ENCODE measurements at regions of chr12 and their contacts with region 1.

Region 1: DNA sequence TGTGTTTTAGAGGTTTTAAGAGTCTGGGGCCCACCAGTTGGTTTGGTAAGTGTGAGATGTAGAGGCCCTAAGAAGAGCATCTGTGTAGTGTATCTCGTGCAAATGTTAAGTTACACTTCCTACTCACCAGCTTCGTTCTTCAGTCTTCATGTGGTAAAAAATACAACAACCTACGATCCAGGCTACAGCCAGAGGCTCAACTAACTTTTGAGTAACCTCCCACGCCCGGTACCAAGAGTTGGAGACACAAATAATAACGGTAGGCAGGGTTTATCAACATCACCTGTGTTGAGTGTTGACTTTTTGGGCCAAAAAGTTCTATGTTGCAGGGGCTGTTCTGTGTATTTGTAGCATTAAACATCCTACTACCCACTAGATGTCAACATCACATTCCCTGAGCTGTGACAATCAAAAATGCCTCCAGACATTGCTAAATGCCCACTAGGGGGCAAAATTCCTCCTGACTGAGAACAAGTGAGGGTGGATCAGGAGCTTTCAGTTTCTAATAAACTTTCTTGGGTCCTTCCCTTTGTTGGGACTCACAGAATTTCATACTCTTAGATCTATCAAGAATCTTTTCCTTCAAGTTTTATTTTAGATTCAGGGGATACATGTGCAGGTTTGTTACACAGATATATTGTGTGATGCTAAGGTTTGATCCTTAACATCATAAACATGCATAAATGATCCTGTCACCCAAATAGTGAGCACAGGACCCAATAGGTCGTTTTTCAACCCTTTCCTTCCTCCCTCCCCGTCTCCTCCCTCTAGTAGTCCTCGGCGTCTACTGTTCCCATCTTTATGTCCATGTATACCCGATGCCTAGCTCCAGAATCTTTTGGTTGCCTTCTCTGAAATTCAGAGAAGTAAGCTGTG is 94.7 kb downstream of the SLC2A13 start:
- DNase-seq: peak; percentile 63
- H3K4me3 ChIP-seq: peak overlapping the region in 1 of 3 experiments; percentile 30
- H3K27ac ChIP-seq: no peak overlapping the region
- H3K4me1 ChIP-seq: no peaks in the 10 kb centered on the region
- H3K27me3 ChIP-seq: no peaks in the 10 kb centered on the region
- CTCF ChIP-seq: peak; percentile 72 to 76
- POLR2A ChIP-seq: no peak

Region 2: DNA sequence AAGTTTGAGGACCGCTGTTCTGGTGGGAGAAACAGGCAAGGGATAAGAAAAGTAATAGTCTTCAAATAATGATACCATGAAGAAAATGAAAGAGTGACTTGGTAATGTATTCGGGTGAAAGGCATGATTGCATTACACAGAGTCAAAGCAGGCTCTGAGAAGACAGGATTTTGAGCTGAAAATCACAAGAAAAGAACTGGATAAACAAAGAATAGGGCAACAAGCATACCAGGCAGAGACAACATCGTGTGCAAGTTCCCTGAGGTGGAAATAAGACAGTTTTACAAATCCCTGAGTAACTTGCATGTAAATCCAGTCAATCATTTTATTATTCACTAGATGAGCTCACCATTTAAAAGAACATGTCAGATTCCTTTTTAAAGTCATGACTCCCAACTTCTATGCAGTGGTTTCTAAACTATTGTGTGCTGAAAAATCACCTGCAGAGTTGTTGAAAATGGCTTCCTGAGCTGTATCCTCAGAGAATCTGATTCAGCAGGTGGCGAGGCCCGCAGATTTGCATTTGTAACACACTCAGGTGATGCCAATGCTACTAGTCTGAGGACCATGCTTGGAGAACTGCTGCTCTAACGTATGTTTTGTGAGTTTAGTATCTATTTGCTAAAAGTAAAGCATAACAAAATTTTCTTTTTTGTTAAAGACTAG is 258.5 kb before region 1 on chr12:
- CTCF ChIA-PET with region 1: no interaction called
- POLR2A ChIA-PET with region 1: no interaction called
- dilution Hi-C with region 1: no loop called
- intact Hi-C with region 1: no loop called
- DNase-seq: no peak
- H3K4me3 ChIP-seq: no peak overlapping the region
- H3K27ac ChIP-seq: no peak overlapping the region
- H3K4me1 ChIP-seq: no peaks in the 10 kb centered on the region
- H3K27me3 ChIP-seq: no peaks in the 10 kb centered on the region
- CTCF ChIP-seq: no peak
- POLR2A ChIP-seq: no peak

Region 3: GRCh38 chr12:39764944-39765560 is 246.1 kb before region 1 on chr12:
- CTCF ChIA-PET with region 1: interaction called, 11 read pairs
- POLR2A ChIA-PET with region 1: no interaction called
- dilution Hi-C with region 1: no loop called
- intact Hi-C with region 1: no loop called
- DNase-seq: peak; percentile 52
- H3K4me3 ChIP-seq: no peak overlapping the region
- H3K27ac ChIP-seq: no peak overlapping the region
- H3K4me1 ChIP-seq: no peaks in the 10 kb centered on the region
- H3K27me3 ChIP-seq: no peaks in the 10 kb centered on the region
- CTCF ChIP-seq: peak; percentile 59 to 64
- POLR2A ChIP-seq: no peak

Region 4: DNA sequence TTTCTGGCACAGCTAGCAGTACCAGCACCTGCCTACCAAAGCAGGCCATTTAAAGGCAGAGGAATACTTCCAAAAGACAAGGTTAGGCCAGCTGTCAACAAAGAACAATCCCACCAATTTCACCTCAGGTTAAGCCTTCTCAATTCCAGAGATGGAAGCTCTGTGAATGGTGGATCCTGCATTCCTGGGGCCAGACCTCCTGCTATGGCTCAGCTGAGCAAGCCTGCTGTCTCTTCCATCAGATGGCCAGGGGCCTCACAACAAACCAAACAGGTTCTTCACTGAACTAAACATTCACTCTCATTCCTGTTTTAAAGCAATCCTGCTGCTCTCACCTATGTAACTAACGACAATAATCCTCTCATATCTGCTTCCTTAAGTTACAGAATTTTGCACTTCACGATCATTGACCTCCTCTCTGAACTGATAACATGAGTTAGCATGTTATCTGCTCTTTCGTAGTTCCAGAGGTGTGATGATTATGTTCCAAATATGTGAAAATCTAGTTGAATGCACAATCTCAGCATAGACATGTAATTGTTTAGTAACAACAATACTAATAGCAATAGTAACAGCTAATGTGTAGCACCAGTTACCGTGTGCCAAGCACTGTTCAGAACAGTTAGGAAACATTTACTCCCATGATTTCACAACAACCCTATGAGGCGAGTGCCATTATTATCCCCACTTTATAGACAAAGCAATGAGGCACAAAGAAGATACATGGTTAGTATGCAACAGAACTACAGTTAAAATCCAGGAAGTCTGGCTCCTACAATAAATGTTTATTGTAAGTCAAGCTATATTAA is 21.5 kb after region 1 on chr12:
- CTCF ChIA-PET with region 1: interaction called, 46 read pairs
- POLR2A ChIA-PET with region 1: no interaction called
- dilution Hi-C with region 1: no loop called
- intact Hi-C with region 1: no loop called
- DNase-seq: no peak
- H3K4me3 ChIP-seq: no peak overlapping the region
- H3K27ac ChIP-seq: no peak overlapping the region
- H3K4me1 ChIP-seq: no peaks in the 10 kb centered on the region
- H3K27me3 ChIP-seq: no peaks in the 10 kb centered on the region
- CTCF ChIP-seq: no peak
- POLR2A ChIP-seq: no peak

Region 5: DNA sequence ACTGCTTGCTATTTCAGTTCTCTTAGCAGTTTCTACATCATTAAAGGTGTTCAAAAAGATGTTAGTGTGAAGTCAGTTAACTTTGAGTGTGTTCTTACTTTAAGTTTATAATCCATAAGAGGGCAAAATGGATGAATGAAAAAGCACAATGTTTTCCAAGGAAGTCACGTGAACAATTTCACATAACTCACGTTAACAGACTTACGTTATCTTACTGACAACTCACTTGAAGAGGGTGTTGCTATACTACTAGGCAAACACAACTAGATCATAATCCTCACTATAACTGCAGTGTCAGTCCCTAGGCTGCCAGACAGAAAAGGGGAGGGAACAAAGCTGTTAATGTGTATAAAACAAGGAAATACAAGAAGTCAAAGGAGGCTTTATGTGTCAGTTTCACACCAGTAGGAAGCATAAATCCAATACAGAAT is 88.3 kb after region 1 on chr12:
- CTCF ChIA-PET with region 1: interaction called, 189 read pairs
- POLR2A ChIA-PET with region 1: no interaction called
- dilution Hi-C with region 1: no loop called
- intact Hi-C with region 1: no loop called
- DNase-seq: peak; percentile 8
- H3K4me3 ChIP-seq: no peak overlapping the region
- H3K27ac ChIP-seq: no peak overlapping the region
- H3K4me1 ChIP-seq: peaks cover 3% of the 10 kb centered on the region
- H3K27me3 ChIP-seq: no peaks in the 10 kb centered on the region
- CTCF ChIP-seq: no peak
- POLR2A ChIP-seq: no peak

Region 6: GRCh38 chr12:40117818-40118217 is 106.7 kb after region 1 on chr12:
- CTCF ChIA-PET with region 1: interaction called, 17 read pairs
- POLR2A ChIA-PET with region 1: no interaction called
- dilution Hi-C with region 1: no loop called
- intact Hi-C with region 1: no loop called
- DNase-seq: no peak
- H3K4me3 ChIP-seq: no peak overlapping the region
- H3K27ac ChIP-seq: no peak overlapping the region
- H3K4me1 ChIP-seq: no peaks in the 10 kb centered on the region
- H3K27me3 ChIP-seq: peaks cover 0 to 5% of the 10 kb centered on the region in 2 experiments
- CTCF ChIP-seq: no peak
- POLR2A ChIP-seq: no peak

Region 7: DNA sequence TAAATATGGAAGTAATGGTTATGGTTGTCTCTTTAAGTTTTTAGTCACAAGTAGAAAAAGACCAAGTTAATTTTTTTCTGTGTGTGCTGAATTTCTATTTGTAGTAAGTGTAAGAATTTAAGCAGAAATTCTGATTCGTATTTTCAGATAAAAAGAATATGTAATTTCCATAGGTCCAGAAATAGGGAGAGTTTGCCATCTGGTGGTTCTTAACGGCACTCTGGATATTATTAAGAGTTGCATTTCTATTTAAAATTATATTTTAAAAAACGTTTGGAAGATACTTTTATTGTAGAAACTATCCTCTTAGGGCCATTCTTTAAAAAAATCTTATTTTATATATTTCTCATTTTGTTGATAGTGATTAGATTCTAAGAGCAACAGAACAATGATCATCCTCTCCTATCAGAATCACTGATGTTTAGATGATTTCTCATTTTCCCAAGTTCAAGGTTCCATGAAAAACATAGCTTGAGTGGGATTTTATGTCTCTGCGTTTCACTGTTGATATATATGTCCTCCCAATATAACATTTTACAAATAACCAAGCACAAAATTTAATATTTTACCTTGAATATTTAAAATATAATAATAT is 301.9 kb after region 1 on chr12:
- CTCF ChIA-PET with region 1: interaction called, 54 read pairs
- POLR2A ChIA-PET with region 1: no interaction called
- dilution Hi-C with region 1: no loop called
- intact Hi-C with region 1: loop called (anchors 1 kb)
- DNase-seq: peak; percentile 43
- H3K4me3 ChIP-seq: no peak overlapping the region
- H3K27ac ChIP-seq: no peak overlapping the region
- H3K4me1 ChIP-seq: no peaks in the 10 kb centered on the region
- H3K27me3 ChIP-seq: no peaks in the 10 kb centered on the region
- CTCF ChIP-seq: peak in 1 of 2 donors; percentile 18
- POLR2A ChIP-seq: no peak